CD8-positive, alpha-beta T cell (primary cell): ENCODE measurements at regions of chr3 and their contacts with region 1.

Region 1: GRCh38 chr3:195442573-195443390 is at the start of gene ACAP2:
- DNase-seq: peak; percentile 95 to 99 (median 99)
- ATAC-seq: peak; percentile 90
- H3K4me3 ChIP-seq: peak within 1 kb of the TSS; percentile 82 to 88
- H3K4me3 Mint-ChIP-seq: peak within 1 kb of the TSS; percentile 95
- H3K27ac ChIP-seq: peak within 1 kb of the TSS; percentile 74 to 82
- H3K27ac Mint-ChIP-seq: peak within 1 kb of the TSS; percentile 92
- H3K4me1 ChIP-seq: peaks cover 39% of the 10 kb centered on the region
- H3K4me1 Mint-ChIP-seq: peaks cover 64% of the 10 kb centered on the region
- H3K27me3 ChIP-seq: no peaks in the 10 kb centered on the region
- H3K27me3 Mint-ChIP-seq: no peaks in the 10 kb centered on the region
- CTCF ChIP-seq: no peak
- total RNA-seq, gene ACAP2: 38.9 to 41.1 TPM

Region 2: DNA sequence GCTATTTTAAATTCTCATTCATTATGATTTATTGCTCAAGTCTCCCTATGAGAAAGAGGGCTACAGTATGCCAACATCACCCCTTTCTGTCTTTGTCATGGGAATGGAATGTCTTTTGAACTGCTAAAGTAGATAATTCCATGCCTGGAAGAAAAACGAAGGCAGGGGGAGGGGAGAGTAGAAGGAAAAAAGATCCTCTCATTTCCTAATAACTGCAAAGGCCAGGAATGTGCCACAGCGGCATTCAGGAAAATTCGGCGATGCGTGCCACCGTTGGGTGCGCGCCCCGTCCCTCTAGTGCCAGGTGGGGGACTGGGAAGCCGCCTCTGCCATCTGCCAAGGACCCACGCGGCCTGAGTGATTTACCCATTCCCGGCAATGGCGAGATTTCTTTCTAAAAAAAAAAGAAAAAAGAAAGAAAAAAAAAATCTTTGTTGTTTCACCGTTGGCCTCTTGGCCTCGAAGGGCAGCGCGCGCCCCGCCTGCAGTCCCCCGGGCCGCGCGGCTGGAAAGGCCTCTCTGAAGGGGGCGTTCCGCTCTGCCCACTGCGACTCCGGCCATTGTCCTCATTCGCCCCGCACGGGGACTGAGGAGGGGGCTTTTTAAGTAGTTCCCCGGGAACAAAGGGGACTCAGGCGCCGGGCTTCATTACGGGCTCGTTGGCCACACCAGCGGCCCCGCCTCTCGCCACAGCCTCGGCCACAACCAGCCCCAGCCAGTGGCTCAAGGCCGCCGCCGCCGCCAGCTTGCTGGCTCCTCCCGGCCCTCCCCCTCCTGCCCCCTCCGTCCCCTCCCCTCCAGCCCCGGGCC is 1146.1 kb before region 1 on chr3:
- CTCF ChIA-PET with region 1: no interaction called
- POLR2A ChIA-PET with region 1: no interaction called
- intact Hi-C with region 1: no loop called
- DNase-seq: no peak
- ATAC-seq: no peak
- H3K4me3 ChIP-seq: no peak overlapping the region
- H3K4me3 Mint-ChIP-seq: no peak overlapping the region
- H3K27ac ChIP-seq: no peak overlapping the region
- H3K27ac Mint-ChIP-seq: no peak overlapping the region
- H3K4me1 ChIP-seq: peaks cover 5% of the 10 kb centered on the region
- H3K4me1 Mint-ChIP-seq: peaks cover 5% of the 10 kb centered on the region
- H3K27me3 ChIP-seq: no peaks in the 10 kb centered on the region
- H3K27me3 Mint-ChIP-seq: peaks cover 9% of the 10 kb centered on the region
- CTCF ChIP-seq: no peak

Region 3: GRCh38 chr3:194769020-194769643 is 673.6 kb before region 1 on chr3:
- CTCF ChIA-PET with region 1: no interaction called
- POLR2A ChIA-PET with region 1: no interaction called
- intact Hi-C with region 1: loop called in 1 of 2 experiments (anchors 5 kb)
- DNase-seq: peak; percentile 82 to 98 (median 89)
- ATAC-seq: peak; percentile 96
- H3K4me3 ChIP-seq: peak overlapping the region; percentile 45 to 51
- H3K4me3 Mint-ChIP-seq: peak overlapping the region; percentile 84
- H3K27ac ChIP-seq: peak overlapping the region; percentile 15 to 71
- H3K27ac Mint-ChIP-seq: peak overlapping the region; percentile 92
- H3K4me1 ChIP-seq: peaks cover 11% of the 10 kb centered on the region
- H3K4me1 Mint-ChIP-seq: peaks cover 26% of the 10 kb centered on the region
- H3K27me3 ChIP-seq: peaks cover 0 to 2% of the 10 kb centered on the region in 2 experiments
- H3K27me3 Mint-ChIP-seq: peaks cover 7% of the 10 kb centered on the region
- CTCF ChIP-seq: no peak

Region 4: DNA sequence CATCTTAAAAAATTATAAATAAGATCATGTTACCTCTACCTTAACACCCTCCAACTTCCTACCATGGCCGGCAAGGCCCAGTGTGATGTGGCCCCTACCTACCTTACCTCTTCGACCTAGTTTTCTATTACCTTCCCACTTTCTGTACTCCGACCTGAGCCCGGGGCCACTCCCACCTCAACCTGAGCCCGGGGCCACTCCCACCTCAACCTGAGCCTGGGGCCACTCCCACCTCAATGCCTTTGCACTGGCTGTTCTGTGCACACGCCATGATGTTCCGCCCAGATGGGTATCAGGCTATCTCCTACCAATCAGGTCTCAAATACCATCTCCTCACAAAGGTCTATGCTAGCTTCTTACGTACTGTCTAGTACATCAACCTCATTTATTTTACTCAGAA is 105.0 kb before region 1 on chr3:
- CTCF ChIA-PET with region 1: no interaction called
- POLR2A ChIA-PET with region 1: no interaction called
- intact Hi-C with region 1: no loop called
- DNase-seq: no peak
- ATAC-seq: no peak
- H3K4me3 ChIP-seq: no peak overlapping the region
- H3K4me3 Mint-ChIP-seq: no peak overlapping the region
- H3K27ac ChIP-seq: no peak overlapping the region
- H3K27ac Mint-ChIP-seq: peak overlapping the region; percentile 35
- H3K4me1 ChIP-seq: no peaks in the 10 kb centered on the region
- H3K4me1 Mint-ChIP-seq: peaks cover 1% of the 10 kb centered on the region
- H3K27me3 ChIP-seq: no peaks in the 10 kb centered on the region
- H3K27me3 Mint-ChIP-seq: no peaks in the 10 kb centered on the region
- CTCF ChIP-seq: no peak

Region 5: GRCh38 chr3:195394024-195394423 is 48.8 kb before region 1 on chr3:
- CTCF ChIA-PET with region 1: interaction called, 3 read pairs
- POLR2A ChIA-PET with region 1: interaction called, 4 read pairs
- intact Hi-C with region 1: loop called in 1 of 2 experiments (anchors 5 kb)
- DNase-seq: no peak
- ATAC-seq: no peak
- H3K4me3 ChIP-seq: no peak overlapping the region
- H3K4me3 Mint-ChIP-seq: no peak overlapping the region
- H3K27ac ChIP-seq: no peak overlapping the region
- H3K27ac Mint-ChIP-seq: no peak overlapping the region
- H3K4me1 ChIP-seq: peaks cover 3% of the 10 kb centered on the region
- H3K4me1 Mint-ChIP-seq: peaks cover 44% of the 10 kb centered on the region
- H3K27me3 ChIP-seq: no peaks in the 10 kb centered on the region
- H3K27me3 Mint-ChIP-seq: no peaks in the 10 kb centered on the region
- CTCF ChIP-seq: no peak

Region 6: GRCh38 chr3:195458316-195458717 is 15.5 kb after region 1 on chr3:
- CTCF ChIA-PET with region 1: interaction called, 3 read pairs
- POLR2A ChIA-PET with region 1: interaction called, 6 read pairs
- intact Hi-C with region 1: loop called in 1 of 2 experiments (anchors 1 kb)
- DNase-seq: peak in 2 of 9 experiments; percentile 35 to 65
- ATAC-seq: peak; percentile 94
- H3K4me3 ChIP-seq: peak overlapping the region in 1 of 2 experiments; percentile 9
- H3K4me3 Mint-ChIP-seq: peak overlapping the region; percentile 75
- H3K27ac ChIP-seq: peak overlapping the region; percentile 15 to 42
- H3K27ac Mint-ChIP-seq: peak overlapping the region; percentile 93
- H3K4me1 ChIP-seq: peaks cover 20% of the 10 kb centered on the region
- H3K4me1 Mint-ChIP-seq: peaks cover 23% of the 10 kb centered on the region
- H3K27me3 ChIP-seq: no peaks in the 10 kb centered on the region
- H3K27me3 Mint-ChIP-seq: no peaks in the 10 kb centered on the region
- CTCF ChIP-seq: no peak

Region 7: GRCh38 chr3:195522254-195523023 is 79.7 kb after region 1 on chr3:
- CTCF ChIA-PET with region 1: interaction called, 5 read pairs
- POLR2A ChIA-PET with region 1: interaction called, 3 read pairs
- intact Hi-C with region 1: loop called (anchors 5 kb)
- DNase-seq: peak in 3 of 9 experiments; percentile 52 to 65 (median 56)
- ATAC-seq: peak; percentile 30
- H3K4me3 ChIP-seq: no peak overlapping the region
- H3K4me3 Mint-ChIP-seq: no peak overlapping the region
- H3K27ac ChIP-seq: no peak overlapping the region
- H3K27ac Mint-ChIP-seq: peak overlapping the region; percentile 75
- H3K4me1 ChIP-seq: peaks cover 35% of the 10 kb centered on the region
- H3K4me1 Mint-ChIP-seq: peaks cover 46% of the 10 kb centered on the region
- H3K27me3 ChIP-seq: no peaks in the 10 kb centered on the region
- H3K27me3 Mint-ChIP-seq: no peaks in the 10 kb centered on the region
- CTCF ChIP-seq: peak; percentile 93